ENCODE measurements at regions of chr17 and their contacts with region 1.

Region 1: DNA sequence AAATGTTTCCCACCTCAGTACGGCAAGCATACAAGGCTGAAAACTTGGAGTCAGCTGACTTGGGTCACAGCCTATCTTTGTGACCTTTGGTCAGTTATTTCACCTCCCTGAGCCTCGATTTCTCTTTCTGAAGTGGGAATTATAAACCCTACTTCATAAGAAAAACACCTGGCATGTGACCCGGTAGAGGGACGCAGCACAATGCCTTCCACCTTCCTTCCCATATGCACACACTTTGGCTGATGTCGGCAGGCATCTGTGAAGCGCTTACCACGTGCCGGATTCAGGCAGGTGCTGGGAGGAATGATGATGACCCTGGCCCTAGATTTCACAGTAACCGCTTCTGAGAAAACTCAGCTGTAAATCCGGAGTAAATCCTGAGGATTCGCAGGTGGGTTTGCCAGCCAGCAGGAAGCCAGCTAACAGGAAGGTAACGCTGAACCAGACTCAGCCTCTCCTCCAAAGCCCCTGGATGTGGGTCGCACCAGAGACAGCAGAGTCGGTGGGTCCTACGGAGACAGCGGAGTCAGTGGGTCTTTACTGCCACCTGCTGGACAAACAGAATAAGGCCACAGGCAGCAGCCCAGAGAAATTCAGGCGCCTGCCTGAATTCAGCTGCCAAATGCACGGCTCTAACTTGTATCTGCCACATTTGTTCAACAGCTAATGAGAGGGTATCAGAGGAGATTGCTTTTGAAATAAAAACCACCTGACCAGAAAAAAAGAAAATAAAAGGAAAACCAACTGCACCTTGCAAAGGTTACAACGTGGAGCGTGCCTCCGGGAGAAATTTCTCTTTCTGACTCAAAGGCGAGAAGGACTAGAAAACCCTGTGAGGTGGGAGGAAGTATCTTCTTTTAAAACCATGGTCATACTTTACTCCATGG is 16.6 kb downstream of the COPRS start:
- DNase-seq: peak in 3 of 4 donors; percentile 60 to 87 (median 81)
- ATAC-seq: peak; percentile 97
- H3K4me3 ChIP-seq: no peak overlapping the region
- H3K27ac ChIP-seq: no peak overlapping the region
- H3K4me1 ChIP-seq: peaks cover 10 to 11% of the 10 kb centered on the region in 2 donors
- H3K27me3 ChIP-seq: peaks cover 0 to 6% of the 10 kb centered on the region in 2 donors
- CTCF ChIP-seq: peak; percentile 95

Region 2: DNA sequence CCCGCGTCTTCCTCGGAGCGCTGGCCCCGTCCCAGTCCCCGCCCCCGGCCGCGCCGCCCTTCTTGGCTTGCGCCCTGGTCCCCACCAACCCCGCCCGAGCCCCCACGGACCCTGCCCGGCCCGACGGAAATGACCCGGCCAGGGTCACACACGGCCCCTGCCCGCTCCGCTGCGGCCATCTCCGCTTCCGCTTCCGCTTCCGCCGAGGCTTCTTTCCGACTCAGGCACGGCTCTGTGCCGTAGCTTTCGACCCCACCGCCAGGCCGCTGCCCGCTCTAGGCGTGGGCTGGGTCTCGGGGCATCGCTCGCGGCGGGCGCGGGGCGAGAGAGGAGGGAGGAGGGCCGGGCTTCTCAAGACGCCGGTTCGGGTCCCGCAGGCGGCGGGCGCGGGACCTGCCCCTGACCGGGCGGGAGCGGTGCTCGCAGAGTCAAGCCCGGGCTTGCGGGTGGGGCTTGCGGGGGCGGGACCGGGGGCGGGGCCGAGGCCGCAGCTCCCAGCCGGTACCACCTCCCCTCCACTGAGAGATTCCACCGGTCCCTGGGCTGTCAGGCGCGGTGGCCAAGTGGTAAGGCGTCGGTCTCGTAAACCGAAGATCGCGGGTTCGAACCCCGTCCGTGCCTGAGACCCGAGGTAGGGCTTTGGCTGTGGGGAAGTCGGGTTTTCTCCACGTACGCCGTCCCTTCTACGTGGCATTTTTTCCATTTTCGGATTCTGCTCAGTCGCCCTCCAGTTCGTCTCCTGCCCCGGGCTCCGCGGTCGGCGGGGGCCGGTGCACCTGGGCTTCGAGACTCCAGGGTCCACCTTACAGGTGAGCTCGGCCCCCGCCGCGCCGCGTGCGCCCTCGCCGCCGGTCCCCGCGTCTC is 292.7 kb before region 1 on chr17:
- intact Hi-C with region 1: loop called (anchors 10 kb)
- DNase-seq: peak; percentile 84 to 96 (median 94)
- ATAC-seq: peak; percentile 97
- H3K4me3 ChIP-seq: peak overlapping the region; percentile 72 to 82
- H3K27ac ChIP-seq: peak overlapping the region; percentile 85 to 96
- H3K4me1 ChIP-seq: peaks cover 0 to 11% of the 10 kb centered on the region in 2 donors
- H3K27me3 ChIP-seq: no peaks in the 10 kb centered on the region
- CTCF ChIP-seq: no peak

Region 3: GRCh38 chr17:31754239-31754945 is 88.0 kb before region 1 on chr17:
- intact Hi-C with region 1: no loop called
- DNase-seq: no peak
- ATAC-seq: no peak
- H3K4me3 ChIP-seq: no peak overlapping the region
- H3K27ac ChIP-seq: no peak overlapping the region
- H3K4me1 ChIP-seq: no peaks in the 10 kb centered on the region
- H3K27me3 ChIP-seq: no peaks in the 10 kb centered on the region
- CTCF ChIP-seq: no peak